Kidney (tissue), 22 donors: ENCODE measurements at regions of chr2 and their contacts with region 1.

Region 1: DNA sequence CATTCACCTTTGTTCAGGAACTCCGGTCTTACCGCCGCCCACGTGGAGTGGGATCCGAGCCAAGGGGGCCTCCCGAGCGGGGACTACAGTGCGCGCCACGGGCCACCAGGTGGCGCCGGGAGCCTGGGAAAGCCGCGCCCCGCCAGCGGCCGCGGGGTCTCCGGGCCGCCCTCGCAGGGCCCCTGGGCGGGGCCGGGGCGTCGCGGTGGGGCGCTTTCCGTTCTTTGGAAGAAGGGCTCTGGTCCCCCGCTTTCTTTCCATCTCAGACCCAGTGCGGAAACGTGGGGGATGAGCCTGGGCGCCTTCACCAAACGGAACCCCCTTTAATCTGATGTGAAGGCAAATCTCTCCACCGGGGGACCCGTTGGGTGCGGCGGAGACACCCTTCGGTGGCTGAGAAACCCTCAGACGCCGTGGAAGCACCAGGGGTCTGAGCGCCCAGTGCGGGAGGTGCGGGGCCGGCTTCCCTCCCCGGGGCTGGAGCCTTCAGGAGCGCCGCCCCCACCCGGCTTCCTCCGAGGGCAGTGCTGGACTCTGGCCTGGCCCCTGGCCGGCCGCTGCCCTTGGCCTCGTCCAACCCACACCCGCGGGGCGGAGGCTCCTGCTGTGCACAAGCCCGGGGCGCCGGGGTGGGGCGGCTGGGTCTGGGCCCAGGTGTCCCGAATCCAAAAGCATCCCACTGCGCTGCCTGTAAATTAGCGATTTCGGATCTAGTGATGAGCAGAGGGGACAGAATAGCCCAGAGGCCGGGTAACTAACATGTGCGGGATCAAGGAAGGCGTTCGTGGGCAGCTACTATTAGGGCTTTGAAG is 44.6 kb downstream of the GORASP2 start:
- DNase-seq: peak; percentile 90 to 95 (median 92)
- H3K4me3 ChIP-seq: peak overlapping the region; percentile 57 to 71 (median 65)
- H3K27ac ChIP-seq: peak overlapping the region; percentile 37 to 45
- H3K4me1 ChIP-seq: no peaks in the 10 kb centered on the region
- H3K27me3 ChIP-seq: no peaks in the 10 kb centered on the region
- CTCF ChIP-seq: peak; percentile 90

Region 2: GRCh38 chr2:171416009-171416926 is 442.6 kb after region 1 on chr2:
- intact Hi-C with region 1: loop called (anchors 10 kb)
- DNase-seq: peak; percentile 89 to 96 (median 91)
- H3K4me3 ChIP-seq: peak overlapping the region; percentile 31 to 62 (median 50)
- H3K27ac ChIP-seq: peak overlapping the region in 1 of 2 donors; percentile 76
- H3K4me1 ChIP-seq: no peaks in the 10 kb centered on the region
- H3K27me3 ChIP-seq: no peaks in the 10 kb centered on the region
- CTCF ChIP-seq: peak; percentile 85